Prostate gland (tissue), 2 donors: ENCODE measurements at regions of chr18 and their contacts with region 1.

Region 1: DNA sequence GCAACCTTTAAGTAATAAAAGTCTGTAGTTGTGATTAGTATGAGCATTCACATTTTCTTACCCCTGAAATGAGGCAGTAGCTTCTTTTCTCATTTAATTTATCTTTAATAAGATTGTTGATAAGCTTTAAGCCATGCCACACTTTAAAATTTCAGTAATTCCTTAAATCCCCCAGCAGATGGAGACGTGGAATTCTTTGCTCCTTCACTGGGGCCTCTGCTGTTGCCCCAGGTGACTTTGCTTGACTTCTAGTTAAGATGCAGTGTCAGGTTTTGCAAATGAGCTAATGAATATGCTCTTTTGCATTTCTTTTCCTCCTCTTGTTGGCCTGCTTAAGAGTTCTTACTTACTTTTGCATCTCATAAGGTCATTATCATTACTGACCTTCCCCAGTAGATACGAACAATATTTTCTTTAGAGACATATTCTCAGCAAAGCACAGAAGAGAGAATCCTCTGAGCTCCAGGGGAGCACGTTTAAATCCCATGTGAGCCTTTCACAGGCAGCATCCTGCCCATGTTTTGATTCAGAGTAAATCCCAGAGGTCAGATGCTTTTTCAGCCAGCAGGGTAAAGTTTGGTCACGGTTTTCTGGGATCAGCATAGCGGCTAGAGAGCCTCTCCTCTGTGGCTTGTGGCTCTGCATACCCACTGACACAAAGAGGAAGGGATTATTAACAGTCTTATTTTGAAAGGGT is 222.9 kb downstream of the PTPRM start:
- DNase-seq: no peak
- H3K4me3 ChIP-seq: no peak overlapping the region
- H3K27ac ChIP-seq: no peak overlapping the region
- H3K4me1 ChIP-seq: no peaks in the 10 kb centered on the region
- H3K27me3 ChIP-seq: no peaks in the 10 kb centered on the region
- CTCF ChIP-seq: peak in 3 of 4 experiments; percentile 47 to 48 (median 47)
- POLR2A ChIP-seq: no peak

Region 2: DNA sequence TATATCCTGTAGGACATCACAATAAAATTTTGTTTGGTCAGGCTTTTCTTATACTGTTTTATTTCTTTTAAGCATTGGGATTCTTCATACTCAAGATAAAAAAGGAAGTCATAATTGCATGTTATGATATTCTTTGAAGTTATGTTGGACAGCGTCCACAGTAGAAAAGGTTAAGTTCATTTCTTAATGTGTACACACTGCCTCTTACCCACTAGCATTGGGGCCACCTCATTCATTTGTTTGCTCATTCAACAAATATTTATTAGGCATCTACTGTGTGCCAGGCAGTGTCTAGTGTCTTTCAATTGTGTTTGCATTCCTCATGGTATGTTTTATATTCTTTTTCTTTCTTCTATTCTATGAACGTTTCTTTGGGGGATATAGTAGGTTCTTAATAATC is 152.7 kb before region 1 on chr18:
- intact Hi-C with region 1: no loop called
- DNase-seq: peak; percentile 19
- H3K4me3 ChIP-seq: no peak overlapping the region
- H3K27ac ChIP-seq: no peak overlapping the region
- H3K4me1 ChIP-seq: peaks cover 6% of the 10 kb centered on the region
- H3K27me3 ChIP-seq: no peaks in the 10 kb centered on the region
- CTCF ChIP-seq: no peak
- POLR2A ChIP-seq: no peak

Region 3: GRCh38 chr18:7711495-7711894 is 78.5 kb before region 1 on chr18:
- intact Hi-C with region 1: no loop called
- DNase-seq: no peak
- H3K4me3 ChIP-seq: no peak overlapping the region
- H3K27ac ChIP-seq: no peak overlapping the region
- H3K4me1 ChIP-seq: no peaks in the 10 kb centered on the region
- H3K27me3 ChIP-seq: no peaks in the 10 kb centered on the region
- CTCF ChIP-seq: no peak
- POLR2A ChIP-seq: no peak

Region 4: DNA sequence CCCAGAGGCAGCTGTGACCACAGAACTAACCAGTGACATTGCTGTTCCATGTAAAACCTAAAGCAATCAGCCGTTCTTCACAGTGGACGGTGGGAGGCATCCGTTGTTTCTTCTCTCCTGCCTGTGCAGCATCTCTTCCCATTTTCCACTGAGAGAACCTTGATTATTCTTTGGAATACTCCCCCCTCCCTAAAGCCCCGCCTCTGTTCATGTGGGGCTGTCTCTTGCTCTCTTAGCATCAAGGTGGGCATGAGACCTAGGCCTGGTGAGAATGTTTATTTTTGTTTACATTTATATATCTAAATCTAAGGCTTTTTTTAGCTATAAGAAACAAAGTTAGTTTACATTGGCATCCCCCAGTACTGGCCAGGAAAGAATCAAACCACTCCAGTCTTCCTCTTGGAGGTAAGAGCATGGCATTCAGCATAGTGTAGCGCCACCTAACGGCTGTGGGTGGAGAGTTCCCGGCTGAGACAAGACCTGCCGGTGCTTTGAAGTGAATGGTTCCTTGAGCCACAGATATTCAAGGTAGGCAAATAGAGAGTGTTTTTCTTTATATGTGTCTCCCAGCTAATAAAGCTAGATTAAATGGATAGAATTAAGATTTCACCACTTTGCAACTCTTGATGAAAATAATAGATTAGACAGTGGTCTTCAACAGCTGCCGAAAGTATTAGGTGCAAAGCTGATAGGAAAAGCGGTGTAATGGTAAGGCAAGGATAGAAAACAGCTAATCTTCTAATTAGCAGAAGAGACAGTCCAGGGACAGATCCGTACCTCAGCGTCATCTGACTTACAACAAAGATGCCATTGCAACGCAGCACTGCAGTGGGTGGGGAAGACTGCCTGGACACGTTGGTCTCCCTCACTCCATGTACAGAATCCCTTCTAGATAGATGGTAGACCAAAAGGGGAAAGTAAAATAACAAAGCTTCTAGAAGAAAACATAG is 599.7 kb after region 1 on chr18:
- intact Hi-C with region 1: loop called (anchors 10 kb)
- DNase-seq: peak; percentile 69
- H3K4me3 ChIP-seq: no peak overlapping the region
- H3K27ac ChIP-seq: no peak overlapping the region
- H3K4me1 ChIP-seq: no peaks in the 10 kb centered on the region
- H3K27me3 ChIP-seq: no peaks in the 10 kb centered on the region
- CTCF ChIP-seq: peak in 3 of 4 experiments; percentile 77 to 81 (median 80)
- POLR2A ChIP-seq: no peak